Transverse colon (tissue), 4 donors: ENCODE measurements at regions of chr1 and their contacts with region 1.

Region 1: GRCh38 chr1:5265438-5266075 is 611.1 kb downstream of the AJAP1 start:
- DNase-seq: no peak
- H3K4me3 ChIP-seq: no peak overlapping the region
- H3K27ac ChIP-seq: no peak overlapping the region
- H3K4me1 ChIP-seq: no peaks in the 10 kb centered on the region
- H3K27me3 ChIP-seq: no peaks in the 10 kb centered on the region
- CTCF ChIP-seq: no peak
- EP300 ChIP-seq: no peak
- POLR2A ChIP-seq: no peak

Region 2: GRCh38 chr1:5220421-5220820 is 45.1 kb before region 1 on chr1:
- in situ Hi-C with region 1: no loop called
- intact Hi-C with region 1: loop called (anchors 2 kb)
- DNase-seq: no peak
- H3K4me3 ChIP-seq: no peak overlapping the region
- H3K27ac ChIP-seq: no peak overlapping the region
- H3K4me1 ChIP-seq: no peaks in the 10 kb centered on the region
- H3K27me3 ChIP-seq: no peaks in the 10 kb centered on the region
- CTCF ChIP-seq: no peak
- EP300 ChIP-seq: no peak
- POLR2A ChIP-seq: no peak